Left cardiac atrium (tissue), 4 donors: ENCODE measurements at regions of chr17 and their contacts with region 1.

Region 1: DNA sequence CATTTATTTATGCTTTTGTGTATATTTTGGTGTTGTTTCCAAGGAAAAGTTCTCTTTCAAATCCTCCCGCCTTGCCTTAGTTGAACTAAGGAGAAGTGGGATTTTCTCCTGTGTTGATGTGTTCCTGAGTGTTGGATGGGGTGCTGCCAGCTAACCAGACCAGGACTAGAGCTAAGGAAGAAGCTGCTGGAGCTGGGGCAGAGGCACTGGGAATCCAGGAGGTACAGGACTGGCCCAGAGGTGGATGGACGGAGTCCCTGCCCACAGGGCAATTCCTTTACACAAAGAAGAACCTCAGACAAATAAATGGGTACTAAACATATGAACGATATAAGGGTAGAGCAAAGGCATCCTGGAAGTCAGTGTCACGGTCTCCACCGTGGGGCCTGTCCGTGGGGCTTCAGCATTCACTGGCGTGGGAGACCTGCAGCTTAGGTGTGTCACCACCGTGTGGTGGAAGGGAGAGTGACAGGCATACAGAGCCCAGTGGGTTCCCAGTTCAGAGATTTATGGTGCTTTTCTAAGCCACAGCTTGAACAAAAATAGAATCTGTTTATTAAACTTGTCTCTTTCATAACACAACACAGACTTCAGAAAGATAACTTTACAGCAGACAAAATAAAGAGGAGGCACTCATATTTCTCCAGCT is 270.7 kb downstream of the NTN1 start:
- DNase-seq: peak; percentile 69
- ATAC-seq: peak; percentile 90 to 96

Region 2: GRCh38 chr17:9239793-9240658 is 52.0 kb before region 1 on chr17:
- intact Hi-C with region 1: loop called in 1 of 2 experiments (anchors 5 kb)
- DNase-seq: peak; percentile 86
- ATAC-seq: peak; percentile 79 to 85